ENCODE measurements at regions of chr12 and their contacts with region 1.

Region 1: GRCh38 chr12:126910570-126910969 is 1356.4 kb upstream of the TMEM132C start:
- DNase-seq: no peak
- H3K4me3 ChIP-seq: no peak overlapping the region
- H3K27ac ChIP-seq: no peak overlapping the region
- H3K4me1 ChIP-seq: no peaks in the 10 kb centered on the region
- CTCF ChIP-seq: no peak

Region 2: DNA sequence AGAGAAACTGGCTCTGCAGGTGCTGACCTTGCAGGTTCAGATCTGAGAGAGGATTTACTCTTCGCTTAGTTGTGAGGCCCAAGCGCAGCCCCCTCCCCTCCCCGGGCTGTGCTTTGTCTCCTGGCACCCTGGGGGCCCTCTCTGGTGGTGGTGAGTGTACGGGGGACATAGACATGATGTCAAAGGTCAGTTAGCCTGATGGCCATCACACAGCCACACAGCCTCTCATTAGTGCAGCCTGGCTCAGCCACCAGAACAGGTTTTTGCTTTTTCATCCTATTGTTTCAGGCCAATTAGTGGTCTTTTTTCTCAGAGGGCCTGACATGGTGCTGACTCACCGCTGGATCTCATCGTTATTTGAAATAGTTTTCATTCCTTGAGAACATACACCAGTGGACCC is 1407.4 kb before region 1 on chr12:
- CTCF ChIA-PET with region 1: interaction called, 12 read pairs
- POLR2A ChIA-PET with region 1: no interaction called
- intact Hi-C with region 1: no loop called
- DNase-seq: no peak
- H3K4me3 ChIP-seq: no peak overlapping the region
- H3K27ac ChIP-seq: no peak overlapping the region
- H3K4me1 ChIP-seq: no peaks in the 10 kb centered on the region
- CTCF ChIP-seq: no peak

Region 3: DNA sequence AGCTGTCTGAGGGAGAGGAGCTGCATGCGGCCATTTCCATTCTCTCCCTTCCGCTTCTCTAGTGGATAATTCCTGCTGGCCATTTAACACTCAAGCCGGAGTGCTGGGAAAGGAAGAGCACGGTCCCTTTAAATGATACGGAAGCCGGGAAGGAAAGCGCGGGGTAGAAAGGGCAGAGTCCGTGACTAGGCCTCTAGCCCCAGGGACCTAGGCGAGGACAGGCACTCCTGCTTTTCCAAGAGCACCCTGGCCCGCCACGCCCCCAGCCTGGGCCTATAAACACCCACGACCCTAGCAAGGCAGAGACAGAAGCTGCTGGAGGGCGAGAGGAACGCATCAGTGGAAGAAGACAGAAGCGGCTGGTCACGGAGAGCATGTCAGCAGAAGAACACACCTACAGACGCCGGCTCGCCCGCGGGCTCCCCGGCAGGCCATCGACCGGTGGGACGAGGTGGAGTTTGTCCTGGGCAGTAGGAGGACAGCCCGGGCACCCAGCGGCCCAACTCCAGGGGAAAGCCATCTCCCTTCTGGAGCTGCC is 149.8 kb after region 1 on chr12:
- CTCF ChIA-PET with region 1: no interaction called
- POLR2A ChIA-PET with region 1: no interaction called
- intact Hi-C with region 1: no loop called
- DNase-seq: no peak
- H3K4me3 ChIP-seq: no peak overlapping the region
- H3K27ac ChIP-seq: no peak overlapping the region
- H3K4me1 ChIP-seq: no peaks in the 10 kb centered on the region
- CTCF ChIP-seq: no peak